Activated CD4-positive, alpha-beta memory T cell treated with anti-CD3 and anti-CD28 coated beads for 36 hours (primary cell): ENCODE measurements at regions of chr19 and their contacts with region 1.

Region 1: DNA sequence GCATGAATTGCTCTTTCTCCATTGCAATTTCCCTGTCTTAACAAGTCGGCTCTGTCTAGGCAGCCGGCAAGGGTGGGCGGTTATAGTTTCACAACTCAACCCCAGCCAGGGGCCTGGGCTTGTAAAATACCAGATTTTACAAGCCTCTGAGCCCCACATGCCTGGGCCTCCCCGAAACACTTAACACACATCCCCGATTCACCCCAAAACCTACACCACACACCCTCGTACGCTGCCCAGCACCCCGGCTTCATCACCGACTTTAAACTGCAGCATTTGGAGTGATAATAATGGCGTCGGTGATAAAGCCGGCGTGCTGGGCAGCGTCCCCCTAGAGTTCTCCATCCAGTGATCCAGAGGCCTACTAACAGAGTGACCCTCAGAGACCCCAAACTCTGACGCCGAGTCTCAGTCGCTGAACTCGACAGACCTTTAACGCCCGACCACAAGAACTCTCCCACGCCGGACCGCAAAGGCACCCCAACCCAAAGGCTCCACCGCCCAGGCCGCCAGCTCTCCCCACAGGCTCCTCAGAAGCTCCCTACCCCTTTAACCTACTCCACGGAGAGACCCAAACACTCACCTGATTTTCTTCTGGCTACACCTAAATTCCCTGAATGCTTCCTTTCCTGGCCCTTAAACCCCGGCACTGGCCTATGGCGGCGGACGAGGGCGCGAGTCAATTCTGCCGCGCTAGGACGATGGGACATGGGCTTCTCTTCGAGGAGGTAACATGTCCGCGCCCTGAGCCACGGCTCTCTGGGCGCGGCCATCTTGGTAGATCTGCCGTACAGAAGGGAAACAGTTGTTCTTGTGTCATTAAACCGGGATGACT is at the start of gene ZNF649:
- DNase-seq: peak; percentile 88
- H3K4me3 Mint-ChIP-seq: peak within 1 kb of the TSS; percentile 99
- H3K27ac Mint-ChIP-seq: peak within 1 kb of the TSS; percentile 97
- H3K4me1 Mint-ChIP-seq: peaks cover 22% of the 10 kb centered on the region
- H3K27me3 Mint-ChIP-seq: peaks cover 16% of the 10 kb centered on the region
- total RNA-seq, gene ZNF649: 6.7 to 9.0 TPM

Region 2: DNA sequence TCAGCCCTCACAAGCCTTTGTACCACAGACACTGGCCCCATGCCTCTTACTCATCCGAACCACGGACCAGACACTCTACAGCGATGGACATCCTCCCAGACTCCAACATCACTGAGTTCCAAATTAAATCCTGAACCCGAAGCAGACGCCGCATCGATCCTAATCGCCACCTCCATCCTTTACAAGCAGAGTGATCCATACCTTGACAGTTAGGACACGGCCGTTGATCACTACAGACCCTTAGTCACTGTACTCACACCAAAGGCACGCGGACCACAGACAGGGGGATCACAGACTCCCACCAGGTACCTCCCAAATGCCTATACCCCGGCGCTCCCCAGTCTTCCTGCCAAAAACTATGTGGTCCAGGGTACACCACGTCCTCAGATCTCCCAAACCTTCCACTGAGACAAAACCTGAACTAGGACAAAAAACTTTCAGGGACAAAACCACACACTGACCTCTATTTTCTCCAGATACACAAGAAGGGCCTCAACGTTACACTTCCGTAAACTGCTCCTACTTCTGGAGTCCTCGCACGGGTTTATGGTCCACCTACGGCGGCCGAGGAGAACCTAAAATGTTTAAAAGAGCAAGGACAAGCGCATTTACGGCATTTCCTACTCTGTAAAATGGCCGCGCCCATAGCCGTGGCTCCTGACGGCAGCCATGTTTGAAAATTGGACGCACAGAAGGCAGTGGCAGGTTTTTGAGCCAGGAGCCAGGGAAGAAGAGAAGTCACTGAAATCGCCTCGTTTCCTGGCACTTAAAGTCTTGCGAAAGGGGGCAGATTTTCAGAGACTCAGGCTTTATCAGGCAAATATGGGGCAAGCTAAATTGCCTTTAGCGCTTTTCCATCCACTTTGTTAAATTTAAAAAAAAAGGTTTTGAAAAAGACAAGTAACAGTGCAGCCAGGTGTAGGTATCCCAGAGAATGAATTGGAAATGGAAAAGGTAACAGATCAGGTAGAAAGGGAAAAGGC is 82.1 kb after region 1 on chr19 and contains the start of gene ZNF350:
- CTCF ChIA-PET with region 1: no interaction called
- POLR2A ChIA-PET with region 1: no interaction called
- intact Hi-C with region 1: loop called (anchors 2 kb)
- DNase-seq: peak; percentile 94
- H3K4me3 Mint-ChIP-seq: peak within 1 kb of the TSS; percentile 89
- H3K27ac Mint-ChIP-seq: peak within 1 kb of the TSS; percentile 87
- H3K4me1 Mint-ChIP-seq: peaks cover 12% of the 10 kb centered on the region
- H3K27me3 Mint-ChIP-seq: no peaks in the 10 kb centered on the region
- total RNA-seq, gene ZNF350: 6.9 to 8.1 TPM